Cardiac septum (tissue), 1 donor: ENCODE measurements at regions of chr7 and their contacts with region 1.

Region 1: GRCh38 chr7:92057362-92057761 is 76.9 kb downstream of the CYP51A1 start:
- DNase-seq: no peak

Region 2: GRCh38 chr7:91880413-91881241 is 176.7 kb before region 1 on chr7 and contains the start of gene MTERF1:
- intact Hi-C with region 1: loop called (anchors 10 kb)
- DNase-seq: peak; percentile 95
- total RNA-seq, gene MTERF1: 7.5 TPM

Region 3: DNA sequence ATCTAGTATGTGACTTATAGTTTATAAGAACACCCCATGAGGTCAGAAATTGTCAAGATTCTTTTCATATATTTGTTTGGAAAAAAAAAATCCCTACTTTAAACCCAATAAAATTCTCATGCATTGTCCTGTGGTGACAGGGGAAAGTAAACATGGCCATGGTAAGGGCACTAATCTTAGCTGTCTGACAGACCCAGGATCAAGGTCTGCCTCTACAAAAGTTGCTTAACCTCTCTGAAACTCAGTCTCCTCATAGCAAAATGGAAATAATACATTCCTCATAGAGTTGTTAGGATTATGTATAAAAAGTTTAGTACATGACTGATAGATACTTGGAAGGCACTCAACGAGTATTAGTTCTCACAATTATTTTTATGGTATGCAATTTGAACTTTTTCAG is 139.0 kb before region 1 on chr7:
- intact Hi-C with region 1: no loop called
- DNase-seq: no peak

Region 4: GRCh38 chr7:92071032-92071431 is 13.7 kb after region 1 on chr7:
- intact Hi-C with region 1: no loop called
- DNase-seq: no peak